ENCODE measurements at regions of chr12 and their contacts with region 1.

Region 1: DNA sequence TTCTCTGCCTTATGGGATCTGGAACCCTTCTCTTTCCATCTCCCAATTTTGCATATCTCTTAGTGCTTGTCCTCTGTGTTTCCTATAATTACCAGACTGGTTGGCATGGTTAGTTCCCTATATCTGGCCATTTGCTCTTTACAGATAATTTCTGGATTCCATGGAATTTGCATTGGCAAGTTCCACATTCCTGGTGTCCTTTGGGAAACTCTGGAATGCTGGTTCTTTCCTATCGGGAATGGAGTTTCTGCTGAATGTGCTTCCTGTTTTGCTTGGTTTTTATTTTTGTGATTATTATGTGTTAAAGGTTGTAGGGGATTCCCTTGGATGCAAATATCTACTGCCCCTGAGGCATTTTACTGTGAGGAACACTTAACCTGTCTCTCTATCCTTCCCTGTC is 193.0 kb upstream of the BTG1 start:
- DNase-seq: no peak
- ATAC-seq: no peak
- H3K4me3 ChIP-seq: no peak overlapping the region
- H3K27ac ChIP-seq: no peak overlapping the region
- H3K4me1 ChIP-seq: no peaks in the 10 kb centered on the region
- H3K27me3 ChIP-seq: no peaks in the 10 kb centered on the region
- CTCF ChIP-seq: no peak

Region 2: GRCh38 chr12:92403210-92404175 is 64.8 kb after region 1 on chr12:
- CTCF ChIA-PET with region 1: no interaction called
- POLR2A ChIA-PET with region 1: no interaction called
- in situ Hi-C with region 1: no loop called
- intact Hi-C with region 1: no loop called
- DNase-seq: no peak
- ATAC-seq: no peak
- H3K4me3 ChIP-seq: no peak overlapping the region
- H3K27ac ChIP-seq: no peak overlapping the region
- H3K4me1 ChIP-seq: no peaks in the 10 kb centered on the region
- H3K27me3 ChIP-seq: no peaks in the 10 kb centered on the region
- CTCF ChIP-seq: no peak

Region 3: GRCh38 chr12:92414170-92415070 is 75.7 kb after region 1 on chr12:
- CTCF ChIA-PET with region 1: no interaction called
- POLR2A ChIA-PET with region 1: no interaction called
- in situ Hi-C with region 1: no loop called
- intact Hi-C with region 1: loop called (anchors 10 kb)
- DNase-seq: no peak
- ATAC-seq: no peak
- H3K4me3 ChIP-seq: no peak overlapping the region
- H3K27ac ChIP-seq: no peak overlapping the region
- H3K4me1 ChIP-seq: no peaks in the 10 kb centered on the region
- H3K27me3 ChIP-seq: no peaks in the 10 kb centered on the region
- CTCF ChIP-seq: no peak